Ascending aorta (tissue), 2 donors: ENCODE measurements at regions of chr6 and their contacts with region 1.

Region 1: GRCh38 chr6:77466055-77466450 is 2.8 kb upstream of the HTR1B start:
- DNase-seq: no peak
- H3K4me3 ChIP-seq: peak overlapping the region; percentile 66 to 90
- H3K27ac ChIP-seq: peak overlapping the region; percentile 79 to 92
- H3K4me1 ChIP-seq: peaks cover 0 to 10% of the 10 kb centered on the region in 2 donors
- H3K27me3 ChIP-seq: no peaks in the 10 kb centered on the region
- CTCF ChIP-seq: peak in 2 of 3 experiments; percentile 69 to 79

Region 2: DNA sequence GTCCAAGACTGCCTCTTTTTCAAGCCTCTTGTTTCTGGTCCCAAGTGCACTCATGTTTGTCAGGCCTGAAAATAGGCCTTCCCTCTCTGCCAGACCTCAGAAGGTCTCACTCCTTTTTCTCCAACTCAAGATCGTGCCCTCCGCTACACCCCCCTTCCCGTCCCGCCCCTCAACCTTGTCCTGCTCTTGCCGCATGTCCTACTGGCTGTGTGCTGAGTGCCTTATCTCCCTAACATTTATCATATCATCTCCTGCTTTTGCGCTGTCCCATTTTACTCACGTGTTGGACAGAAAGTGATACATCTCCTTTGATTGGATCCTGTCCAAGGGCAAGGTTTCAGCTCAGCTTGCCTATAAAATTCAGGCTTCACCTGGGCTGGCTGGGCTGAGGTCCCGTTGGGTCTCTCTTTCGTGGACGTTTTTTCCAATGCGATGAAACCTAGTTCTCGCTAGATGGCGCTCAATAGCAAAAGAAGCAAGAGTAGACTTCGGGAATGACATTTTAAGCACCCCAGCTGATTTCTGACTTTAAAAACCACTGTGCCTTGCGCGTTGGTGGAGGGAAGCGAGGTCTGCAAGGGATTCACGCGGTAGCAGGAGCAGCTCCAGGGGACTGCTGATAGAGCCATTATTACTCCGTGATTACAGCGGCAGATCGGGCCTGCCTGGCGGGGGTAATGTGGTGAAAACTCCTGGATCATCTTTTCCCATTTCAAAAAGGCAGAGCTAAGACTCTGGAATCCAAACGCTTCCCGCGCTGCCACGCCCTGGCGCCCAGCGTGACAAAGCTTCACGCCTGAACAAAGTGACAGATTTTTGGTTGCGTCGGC is 1531.2 kb before region 1 on chr6:
- intact Hi-C with region 1: loop called (anchors 5 kb)
- DNase-seq: peak in 1 of 2 donors; percentile 69
- H3K4me3 ChIP-seq: peak overlapping the region; percentile 51 to 60
- H3K27ac ChIP-seq: no peak overlapping the region
- H3K4me1 ChIP-seq: peaks cover 0 to 12% of the 10 kb centered on the region in 2 donors
- H3K27me3 ChIP-seq: no peaks in the 10 kb centered on the region
- CTCF ChIP-seq: peak; percentile 22 to 81 (median 67)

Region 3: GRCh38 chr6:76682842-76683241 is 783.2 kb before region 1 on chr6:
- intact Hi-C with region 1: loop called (anchors 10 kb)
- DNase-seq: no peak
- H3K4me3 ChIP-seq: no peak overlapping the region
- H3K27ac ChIP-seq: no peak overlapping the region
- H3K4me1 ChIP-seq: no peaks in the 10 kb centered on the region
- H3K27me3 ChIP-seq: no peaks in the 10 kb centered on the region
- CTCF ChIP-seq: peak in 2 of 3 experiments; percentile 23 to 42

Region 4: DNA sequence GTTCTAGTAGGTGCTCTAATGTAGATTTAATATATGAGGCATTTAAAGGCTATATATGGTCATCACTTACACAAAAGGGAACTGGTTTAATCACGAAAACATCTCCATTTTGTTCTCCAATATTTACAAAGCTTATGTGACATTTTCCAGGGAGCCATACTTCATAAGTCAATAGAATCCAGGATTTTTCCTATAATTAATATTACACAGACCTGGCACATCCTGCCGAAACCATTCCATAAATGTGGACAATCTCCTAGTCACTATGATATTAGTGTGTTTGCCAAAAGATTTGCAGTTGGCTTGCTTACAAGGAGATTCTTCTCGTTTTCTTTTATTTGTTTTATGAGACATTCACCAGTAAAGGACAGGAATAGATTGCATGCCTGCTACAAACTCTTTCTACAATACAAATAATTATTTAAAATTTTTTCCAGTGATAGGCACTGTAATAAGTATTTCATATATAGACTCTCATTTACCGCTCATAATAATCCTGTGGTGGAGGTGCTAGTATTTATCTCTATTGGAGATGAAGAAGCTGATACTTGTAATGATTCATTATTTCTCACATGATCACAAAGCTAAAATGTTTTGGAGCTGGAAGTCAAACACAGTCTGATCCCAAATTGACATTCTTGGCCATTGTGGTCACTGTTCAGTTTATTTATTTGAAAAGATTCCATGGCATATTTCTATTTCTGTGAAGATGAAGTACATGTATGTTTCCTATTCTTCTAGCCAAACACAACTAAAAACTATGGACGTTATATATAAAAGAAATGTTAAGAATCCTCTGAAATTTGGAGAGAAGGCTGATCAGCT is 599.8 kb before region 1 on chr6:
- intact Hi-C with region 1: loop called (anchors 5 kb)
- DNase-seq: no peak
- H3K4me3 ChIP-seq: no peak overlapping the region
- H3K27ac ChIP-seq: peak overlapping the region; percentile 41 to 63
- H3K4me1 ChIP-seq: peaks cover 0 to 7% of the 10 kb centered on the region in 2 donors
- H3K27me3 ChIP-seq: no peaks in the 10 kb centered on the region
- CTCF ChIP-seq: no peak

Region 5: GRCh38 chr6:77015350-77015749 is 450.7 kb before region 1 on chr6:
- intact Hi-C with region 1: loop called (anchors 10 kb)
- DNase-seq: no peak
- H3K4me3 ChIP-seq: no peak overlapping the region
- H3K27ac ChIP-seq: peak overlapping the region in 1 of 2 donors; percentile 35
- H3K4me1 ChIP-seq: no peaks in the 10 kb centered on the region
- H3K27me3 ChIP-seq: no peaks in the 10 kb centered on the region
- CTCF ChIP-seq: no peak

Region 6: GRCh38 chr6:77341058-77341986 is 124.7 kb before region 1 on chr6:
- intact Hi-C with region 1: no loop called
- DNase-seq: no peak
- H3K4me3 ChIP-seq: no peak overlapping the region
- H3K27ac ChIP-seq: no peak overlapping the region
- H3K4me1 ChIP-seq: no peaks in the 10 kb centered on the region
- H3K27me3 ChIP-seq: no peaks in the 10 kb centered on the region
- CTCF ChIP-seq: no peak

Region 7: GRCh38 chr6:77450924-77451323 is 15.1 kb before region 1 on chr6:
- intact Hi-C with region 1: no loop called
- DNase-seq: no peak
- H3K4me3 ChIP-seq: no peak overlapping the region
- H3K27ac ChIP-seq: no peak overlapping the region
- H3K4me1 ChIP-seq: peaks cover 0 to 5% of the 10 kb centered on the region in 2 donors
- H3K27me3 ChIP-seq: no peaks in the 10 kb centered on the region
- CTCF ChIP-seq: peak in 2 of 3 experiments; percentile 24 to 31